ENCODE measurements at regions of chr12 and their contacts with region 1.

Region 1: GRCh38 chr12:71840231-71840847 is 780 bp downstream of the TBC1D15 start:
- DNase-seq: peak in 2 of 9 donors; percentile 22 to 59
- ATAC-seq: peak; percentile 21
- H3K4me3 ChIP-seq: peak overlapping the region; percentile 80
- H3K4me3 Mint-ChIP-seq: peak overlapping the region; percentile 91 to 97 (median 94)
- H3K27ac ChIP-seq: peak overlapping the region; percentile 96
- H3K27ac Mint-ChIP-seq: peak overlapping the region; percentile 96 to 100 (median 99)
- H3K4me1 ChIP-seq: peaks cover 14 to 35% of the 10 kb centered on the region in 2 donors
- H3K4me1 Mint-ChIP-seq: peaks cover 29 to 69% (median 48%) of the 10 kb centered on the region in 7 donors
- H3K27me3 ChIP-seq: no peaks in the 10 kb centered on the region
- H3K27me3 Mint-ChIP-seq: no peaks in the 10 kb centered on the region

Region 2: GRCh38 chr12:70365648-70366518 is 1474.5 kb before region 1 on chr12 and contains the start of gene KCNMB4:
- CTCF ChIA-PET with region 1: no interaction called
- POLR2A ChIA-PET with region 1: no interaction called
- intact Hi-C with region 1: loop called in 1 of 2 experiments (anchors 5 kb)
- DNase-seq: peak; percentile 48 to 85 (median 68)
- ATAC-seq: peak; percentile 86
- H3K4me3 ChIP-seq: peak within 1 kb of the TSS; percentile 70
- H3K4me3 Mint-ChIP-seq: peak within 1 kb of the TSS; percentile 94 to 99 (median 97)
- H3K27ac ChIP-seq: peak within 1 kb of the TSS; percentile 71
- H3K27ac Mint-ChIP-seq: peak within 1 kb of the TSS; percentile 58 to 91 (median 89)
- H3K4me1 ChIP-seq: peaks cover 16 to 19% of the 10 kb centered on the region in 2 donors
- H3K4me1 Mint-ChIP-seq: peaks cover 12 to 41% (median 34%) of the 10 kb centered on the region in 7 donors
- H3K27me3 ChIP-seq: peaks cover 0 to 4% of the 10 kb centered on the region in 2 donors
- H3K27me3 Mint-ChIP-seq: peaks cover 0 to 54% (median 0%) of the 10 kb centered on the region in 5 donors
- total RNA-seq, gene KCNMB4: 0.31 to 1.9 (median 1.4) TPM

Region 3: DNA sequence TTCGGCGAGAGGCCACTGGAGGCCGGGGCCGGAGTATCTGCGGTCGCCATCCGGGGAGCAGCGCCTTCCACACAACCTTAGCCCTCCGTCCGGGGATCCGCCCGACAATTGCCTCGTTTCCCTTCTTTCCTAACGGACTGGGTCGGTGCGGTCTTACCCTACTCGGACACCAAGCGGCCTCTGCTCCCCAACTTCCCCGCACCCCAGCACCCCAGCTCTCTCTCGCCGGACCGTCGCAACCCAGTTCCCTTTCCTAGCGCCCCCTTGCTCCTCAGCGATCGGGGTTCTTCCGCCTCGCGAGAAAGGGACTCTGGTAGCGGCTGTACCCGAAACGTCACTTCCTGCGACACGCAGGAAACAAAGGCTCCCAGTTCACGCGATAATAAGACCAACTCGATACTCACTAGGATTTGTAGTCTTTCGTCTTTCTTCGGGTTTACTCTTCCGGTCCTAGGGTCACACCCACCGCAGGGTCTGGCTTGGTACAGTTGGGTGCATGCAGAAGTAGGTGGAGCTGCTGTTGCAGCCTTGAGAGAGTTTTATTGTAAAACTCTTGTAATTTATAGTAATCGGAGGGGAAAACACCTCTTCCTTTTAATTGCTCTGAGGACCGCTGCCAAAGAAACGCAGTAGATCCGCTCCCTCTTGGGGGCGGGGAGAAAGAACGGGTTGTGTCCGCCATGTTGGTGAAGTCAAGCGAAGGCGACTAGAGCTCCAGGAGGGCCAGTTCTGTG is 176.6 kb before region 1 on chr12 and contains the start of gene ZFC3H1:
- CTCF ChIA-PET with region 1: interaction called, 3 read pairs
- POLR2A ChIA-PET with region 1: interaction called, 26 read pairs
- intact Hi-C with region 1: loop called (anchors 1 kb)
- DNase-seq: peak; percentile 78 to 97 (median 95)
- ATAC-seq: peak; percentile 87
- H3K4me3 ChIP-seq: peak within 1 kb of the TSS; percentile 76
- H3K4me3 Mint-ChIP-seq: peak within 1 kb of the TSS; percentile 94 to 100 (median 99)
- H3K27ac ChIP-seq: peak within 1 kb of the TSS; percentile 97
- H3K27ac Mint-ChIP-seq: peak within 1 kb of the TSS; percentile 96 to 100 (median 99)
- H3K4me1 ChIP-seq: peaks cover 25 to 29% of the 10 kb centered on the region in 2 donors
- H3K4me1 Mint-ChIP-seq: peaks cover 34 to 70% (median 60%) of the 10 kb centered on the region in 7 donors
- H3K27me3 ChIP-seq: no peaks in the 10 kb centered on the region
- H3K27me3 Mint-ChIP-seq: no peaks in the 10 kb centered on the region
- total RNA-seq, gene ZFC3H1: 74.6 to 147 (median 133) TPM

Region 4: GRCh38 chr12:71754461-71755145 is 85.7 kb before region 1 on chr12 and contains the start of gene RAB21:
- CTCF ChIA-PET with region 1: no interaction called
- POLR2A ChIA-PET with region 1: interaction called, 38 read pairs
- intact Hi-C with region 1: loop called (anchors 1 kb)
- DNase-seq: peak; percentile 95 to 99 (median 97)
- ATAC-seq: peak; percentile 94
- H3K4me3 ChIP-seq: peak within 1 kb of the TSS; percentile 70
- H3K4me3 Mint-ChIP-seq: peak within 1 kb of the TSS; percentile 86 to 95 (median 94)
- H3K27ac ChIP-seq: peak within 1 kb of the TSS; percentile 100
- H3K27ac Mint-ChIP-seq: peak within 1 kb of the TSS; percentile 91 to 98 (median 95)
- H3K4me1 ChIP-seq: peaks cover 10 to 11% of the 10 kb centered on the region in 2 donors
- H3K4me1 Mint-ChIP-seq: peaks cover 21 to 47% (median 43%) of the 10 kb centered on the region in 7 donors
- H3K27me3 ChIP-seq: no peaks in the 10 kb centered on the region
- H3K27me3 Mint-ChIP-seq: peaks cover 0 to 32% (median 5%) of the 10 kb centered on the region in 5 donors
- total RNA-seq, gene RAB21: 53.6 to 81.7 (median 73.7) TPM

Region 5: GRCh38 chr12:71780237-71780822 is 60.0 kb before region 1 on chr12:
- CTCF ChIA-PET with region 1: interaction called, 38 read pairs
- POLR2A ChIA-PET with region 1: interaction called, 5 read pairs
- intact Hi-C with region 1: no loop called
- DNase-seq: peak in 7 of 9 donors; percentile 14 to 61 (median 50)
- ATAC-seq: peak; percentile 68
- H3K4me3 ChIP-seq: no peak overlapping the region
- H3K4me3 Mint-ChIP-seq: no peak overlapping the region
- H3K27ac ChIP-seq: peak overlapping the region; percentile 38
- H3K27ac Mint-ChIP-seq: peak overlapping the region; percentile 9 to 83 (median 32)
- H3K4me1 ChIP-seq: no peaks in the 10 kb centered on the region
- H3K4me1 Mint-ChIP-seq: peaks cover 0 to 23% (median 6%) of the 10 kb centered on the region in 7 donors
- H3K27me3 ChIP-seq: no peaks in the 10 kb centered on the region
- H3K27me3 Mint-ChIP-seq: no peaks in the 10 kb centered on the region

Region 6: GRCh38 chr12:71938728-71939385 is 98.5 kb after region 1 on chr12 and contains the start of gene TPH2:
- CTCF ChIA-PET with region 1: no interaction called
- POLR2A ChIA-PET with region 1: no interaction called
- intact Hi-C with region 1: loop called in 1 of 2 experiments (anchors 5 kb)
- DNase-seq: peak; percentile 12 to 59 (median 32)
- ATAC-seq: peak; percentile 80
- H3K4me3 ChIP-seq: no peak within 1 kb of the TSS
- H3K4me3 Mint-ChIP-seq: no peak within 1 kb of the TSS
- H3K27ac ChIP-seq: no peak within 1 kb of the TSS
- H3K27ac Mint-ChIP-seq: peak within 1 kb of the TSS in 1 of 9 donors; percentile 26
- H3K4me1 ChIP-seq: no peaks in the 10 kb centered on the region
- H3K4me1 Mint-ChIP-seq: peaks cover 0 to 9% (median 0%) of the 10 kb centered on the region in 7 donors
- H3K27me3 ChIP-seq: no peaks in the 10 kb centered on the region
- H3K27me3 Mint-ChIP-seq: peaks cover 57 to 81% (median 62%) of the 10 kb centered on the region in 5 donors
- total RNA-seq, gene TPH2: 0.16 TPM in 1 of 5 experiments, not detected in the others

Measured in naive thymus-derived CD4-positive, alpha-beta T cell (primary cell).